ENCODE measurements at regions of chr11 and their contacts with region 1.

Region 1: GRCh38 chr11:63986156-63986931 is at the start of gene OTUB1:
- DNase-seq: peak; percentile 95
- ATAC-seq: peak; percentile 87
- H3K4me3 Mint-ChIP-seq: peak within 1 kb of the TSS; percentile 85
- H3K27ac Mint-ChIP-seq: peak within 1 kb of the TSS; percentile 96
- H3K4me1 Mint-ChIP-seq: peaks cover 37% of the 10 kb centered on the region
- H3K27me3 Mint-ChIP-seq: no peaks in the 10 kb centered on the region
- total RNA-seq, gene OTUB1: 90.1 to 97.6 TPM

Region 2: GRCh38 chr11:63974259-63975143 is 11.8 kb before region 1 on chr11 and contains the start of gene COX8A:
- CTCF ChIA-PET with region 1: interaction called, 10 read pairs
- DNase-seq: peak; percentile 99
- ATAC-seq: peak; percentile 99
- H3K4me3 Mint-ChIP-seq: peak within 1 kb of the TSS; percentile 100
- H3K27ac Mint-ChIP-seq: peak within 1 kb of the TSS; percentile 100
- H3K4me1 Mint-ChIP-seq: peaks cover 34% of the 10 kb centered on the region
- H3K27me3 Mint-ChIP-seq: no peaks in the 10 kb centered on the region
- total RNA-seq, gene COX8A: 445 to 484 TPM

Region 3: DNA sequence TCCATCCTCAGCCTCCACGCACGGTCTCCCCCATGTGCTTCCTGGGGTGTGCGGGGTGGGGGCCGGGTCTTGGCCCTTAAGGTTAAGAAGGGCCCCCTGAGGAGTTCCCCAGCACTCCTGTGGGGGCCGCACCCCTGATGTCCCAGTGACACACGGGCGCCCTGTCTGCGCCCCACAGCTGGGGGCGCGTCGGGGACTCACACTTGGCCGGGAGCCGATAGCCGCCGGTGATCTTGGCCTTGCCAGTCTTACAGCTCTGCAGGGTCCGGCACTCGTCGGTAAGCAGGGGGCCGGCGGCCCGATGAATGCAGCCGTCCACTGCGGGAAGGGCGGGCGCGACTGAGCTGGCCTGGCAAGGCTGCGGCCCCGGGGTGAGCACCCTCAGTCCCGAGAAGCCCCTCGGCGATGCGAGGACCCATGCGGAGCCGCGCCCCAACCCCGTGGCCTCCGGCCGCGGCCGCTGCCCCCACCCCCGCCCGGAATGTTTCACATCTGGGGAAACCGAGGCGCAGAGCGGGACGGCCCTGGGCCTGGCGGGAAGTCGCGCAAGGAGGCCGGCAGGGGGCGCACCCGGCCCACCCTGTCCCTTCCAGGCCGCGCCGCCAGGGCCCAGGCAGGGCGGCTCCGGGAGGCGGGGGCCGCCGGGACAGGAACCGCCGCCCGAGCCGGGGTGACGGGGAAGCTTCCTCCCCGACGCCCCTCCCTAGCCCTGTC is 13.8 kb after region 1 on chr11:
- CTCF ChIA-PET with region 1: interaction called, 37 read pairs
- DNase-seq: peak; percentile 77
- ATAC-seq: peak; percentile 89
- H3K4me3 Mint-ChIP-seq: no peak overlapping the region
- H3K27ac Mint-ChIP-seq: no peak overlapping the region
- H3K4me1 Mint-ChIP-seq: peaks cover 5% of the 10 kb centered on the region
- H3K27me3 Mint-ChIP-seq: peaks cover 7% of the 10 kb centered on the region

Measured in activated CD8-positive, alpha-beta memory T cell treated with anti-CD3 and anti-CD28 coated beads, Interleukin-2, amount 10 ng/mL, durations not matched to agents 7 days and 5 days (primary cell).